ENCODE measurements at regions of chr11 and their contacts with region 1.

Region 1: GRCh38 chr11:48109046-48109666 is 107.5 kb upstream of the OR4B1 start:
- DNase-seq: no peak
- H3K4me3 Mint-ChIP-seq: peak overlapping the region; percentile 0
- H3K27ac Mint-ChIP-seq: peak overlapping the region; percentile 78
- H3K4me1 Mint-ChIP-seq: peaks cover 44% of the 10 kb centered on the region
- H3K27me3 Mint-ChIP-seq: no peaks in the 10 kb centered on the region

Region 2: DNA sequence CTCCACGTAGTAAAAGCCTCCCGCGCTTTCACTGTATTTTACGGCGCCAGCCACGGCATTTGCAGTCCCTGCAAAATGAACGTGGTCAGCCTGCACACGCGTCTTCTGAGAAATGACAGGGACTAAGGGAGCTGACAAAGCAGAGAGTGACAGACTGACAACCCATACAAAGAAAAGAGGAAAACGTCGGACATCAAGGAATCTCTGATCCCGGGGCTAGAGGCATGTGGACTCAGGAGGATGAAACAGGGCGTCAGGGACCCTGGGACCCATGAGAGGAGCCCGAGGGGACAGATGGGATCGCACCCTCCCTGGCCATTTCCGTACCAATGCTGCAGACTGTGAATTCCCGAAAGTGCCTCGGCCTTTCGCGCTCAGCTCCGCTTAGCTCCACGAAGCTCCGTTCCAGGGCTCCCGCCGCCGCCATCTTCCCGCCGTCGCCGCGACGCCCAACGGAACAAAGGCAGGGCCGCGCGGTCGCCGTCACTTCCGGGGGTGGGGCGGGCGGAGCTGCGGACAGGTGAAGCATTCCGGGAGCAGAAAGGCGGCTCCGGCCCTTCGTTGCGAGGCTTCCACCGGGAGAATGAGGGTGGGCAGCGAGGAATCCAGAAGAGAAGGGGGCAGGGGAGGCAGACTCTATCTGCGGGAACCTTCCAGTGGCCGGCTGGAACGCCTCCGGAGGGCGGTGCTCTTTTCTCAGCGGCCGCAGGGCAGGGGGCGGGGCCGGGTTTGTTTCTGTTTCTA is 261.1 kb before region 1 on chr11 and contains the start of gene NUP160:
- intact Hi-C with region 1: loop called (anchors 1 kb)
- DNase-seq: peak; percentile 85
- H3K4me3 Mint-ChIP-seq: peak within 1 kb of the TSS; percentile 97
- H3K27ac Mint-ChIP-seq: peak within 1 kb of the TSS; percentile 98
- H3K4me1 Mint-ChIP-seq: peaks cover 33% of the 10 kb centered on the region
- H3K27me3 Mint-ChIP-seq: no peaks in the 10 kb centered on the region
- total RNA-seq, gene NUP160: 81.2 and 84.7 TPM in 2 replicates

Region 3: DNA sequence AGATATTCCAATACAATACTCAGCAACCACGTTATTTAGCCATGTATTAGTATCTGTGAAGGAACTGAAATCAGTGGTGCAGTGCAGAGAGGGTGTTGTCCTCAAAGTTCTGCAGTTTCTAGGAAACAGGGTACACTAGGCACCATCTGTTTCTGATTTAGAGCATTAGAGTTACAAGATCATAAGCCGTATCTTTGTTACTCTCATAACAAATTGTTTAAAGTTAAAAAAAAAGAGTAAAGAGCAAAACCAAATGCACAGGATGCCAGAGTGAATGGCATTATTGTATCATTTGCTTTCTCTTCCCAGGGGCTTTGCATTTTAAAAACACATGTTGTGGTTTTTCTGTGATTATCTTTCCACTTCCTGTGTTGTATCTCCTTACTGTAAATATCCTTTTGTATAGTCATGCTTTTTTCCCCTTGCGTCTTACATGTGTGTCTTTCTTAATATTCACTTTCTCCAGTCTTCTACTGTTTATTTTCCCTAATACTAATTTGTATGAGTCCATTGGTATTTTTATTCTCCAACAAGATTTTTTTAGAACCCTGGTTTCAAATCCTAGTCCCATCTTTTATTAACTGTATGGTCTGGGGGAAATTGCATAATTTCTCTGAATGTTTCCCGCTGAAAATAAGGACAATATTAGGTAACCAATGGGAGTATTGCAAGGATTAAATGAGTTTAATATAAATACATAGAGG is 245.8 kb before region 1 on chr11:
- intact Hi-C with region 1: loop called (anchors 5 kb)
- DNase-seq: no peak
- H3K4me3 Mint-ChIP-seq: no peak overlapping the region
- H3K27ac Mint-ChIP-seq: peak overlapping the region; percentile 28
- H3K4me1 Mint-ChIP-seq: peaks cover 27% of the 10 kb centered on the region
- H3K27me3 Mint-ChIP-seq: no peaks in the 10 kb centered on the region

Region 4: GRCh38 chr11:47932544-47932943 is 176.6 kb before region 1 on chr11:
- intact Hi-C with region 1: loop called (anchors 1 kb)
- DNase-seq: no peak
- H3K4me3 Mint-ChIP-seq: no peak overlapping the region
- H3K27ac Mint-ChIP-seq: no peak overlapping the region
- H3K4me1 Mint-ChIP-seq: peaks cover 20% of the 10 kb centered on the region
- H3K27me3 Mint-ChIP-seq: no peaks in the 10 kb centered on the region

Region 5: GRCh38 chr11:47980245-47981049 is 128.7 kb before region 1 on chr11 and contains the start of gene PTPRJ:
- intact Hi-C with region 1: loop called (anchors 1 kb)
- DNase-seq: peak; percentile 59
- H3K4me3 Mint-ChIP-seq: peak within 1 kb of the TSS; percentile 95
- H3K27ac Mint-ChIP-seq: peak within 1 kb of the TSS; percentile 34
- H3K4me1 Mint-ChIP-seq: peaks cover 24% of the 10 kb centered on the region
- H3K27me3 Mint-ChIP-seq: peaks cover 10% of the 10 kb centered on the region
- total RNA-seq, gene PTPRJ: 50.9 and 53.2 TPM in 2 replicates

Region 6: GRCh38 chr11:48073031-48073861 is 35.9 kb before region 1 on chr11:
- intact Hi-C with region 1: loop called (anchors 5 kb)
- DNase-seq: no peak
- H3K4me3 Mint-ChIP-seq: peak overlapping the region; percentile 49
- H3K27ac Mint-ChIP-seq: peak overlapping the region; percentile 79
- H3K4me1 Mint-ChIP-seq: peaks cover 36% of the 10 kb centered on the region
- H3K27me3 Mint-ChIP-seq: no peaks in the 10 kb centered on the region

Measured in activated T-helper 2 cell treated with anti-CD3 and anti-CD28 coated beads, Interferon-gamma antibody, Interleukin-2, Interleukin-4, amounts not matched to agents 10 μg/mL and 5 μg/mL and 100 μg/mL, durations not matched to agents 14 hours and 24 hours and 36 hours (primary cell).